HCT116 (cell line): ENCODE measurements at regions of chr6 and their contacts with region 1.

Region 1: DNA sequence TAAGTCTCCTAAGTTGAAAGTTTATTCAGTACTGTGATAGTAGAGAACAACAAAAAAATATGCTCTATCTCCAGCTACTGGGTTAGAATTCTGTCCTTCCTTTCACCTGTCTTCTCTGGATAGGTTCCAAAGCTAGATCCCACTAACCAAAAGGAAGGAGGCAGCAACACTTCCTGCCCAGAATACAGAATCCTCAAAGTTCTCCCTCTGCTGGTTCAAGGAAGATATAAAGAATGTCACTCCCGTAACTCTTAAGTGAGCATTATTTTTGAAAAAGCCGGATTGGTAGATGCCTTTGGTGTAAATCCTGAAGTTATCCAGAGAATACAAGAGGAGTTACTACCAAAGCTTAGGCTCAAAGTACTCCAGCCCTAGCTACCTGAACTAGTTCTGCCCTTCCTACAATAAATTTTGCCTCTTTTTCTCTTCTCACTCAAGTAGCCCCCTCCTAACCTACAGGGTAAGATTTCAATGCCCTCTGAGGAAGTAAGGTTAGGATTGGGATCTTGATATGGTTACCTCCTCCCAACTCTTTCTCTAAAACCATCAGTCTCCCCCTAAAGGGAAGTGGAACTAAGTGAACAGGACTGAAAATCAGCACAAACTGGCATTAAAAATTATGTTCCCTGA is 26.0 kb upstream of the CRIP3 start:
- DNase-seq: peak; percentile 68
- ATAC-seq: peak; percentile 98
- H3K4me3 ChIP-seq: no peak overlapping the region
- H3K27ac ChIP-seq: no peak overlapping the region
- H3K4me1 ChIP-seq: peaks cover 4 to 6% of the 10 kb centered on the region in 2 experiments; a peak in 3 of 4 replicates
- H3K27me3 ChIP-seq: no peaks in the 10 kb centered on the region
- CTCF ChIP-seq: peak; percentile 60 to 79 (median 60); a peak in 5 of 6 replicates
- POLR2A ChIP-seq: no peak
- RAD21 ChIP-seq: peak; percentile 67

Region 2: GRCh38 chr6:43203029-43203717 is 131.4 kb before region 1 on chr6:
- CTCF ChIA-PET with region 1: no interaction called
- POLR2A ChIA-PET with region 1: no interaction called
- RAD21 ChIA-PET with region 1: no interaction called
- intact Hi-C with region 1: no loop called
- DNase-seq: no peak
- ATAC-seq: peak; percentile 26; the same call in 1 of the 2 replicates
- H3K4me3 ChIP-seq: no peak overlapping the region
- H3K27ac ChIP-seq: no peak overlapping the region
- H3K4me1 ChIP-seq: no peaks in the 10 kb centered on the region
- H3K27me3 ChIP-seq: no peaks in the 10 kb centered on the region
- CTCF ChIP-seq: no peak
- POLR2A ChIP-seq: no peak
- RAD21 ChIP-seq: no peak

Region 3: GRCh38 chr6:43263314-43264178 is 71.0 kb before region 1 on chr6:
- CTCF ChIA-PET with region 1: interaction called, 16 read pairs
- POLR2A ChIA-PET with region 1: no interaction called
- RAD21 ChIA-PET with region 1: interaction called in 1 of 2 experiments, 3 read pairs
- intact Hi-C with region 1: loop called (anchors 1 kb)
- DNase-seq: peak; percentile 51
- ATAC-seq: peak; percentile 99
- H3K4me3 ChIP-seq: no peak overlapping the region
- H3K27ac ChIP-seq: no peak overlapping the region
- H3K4me1 ChIP-seq: no peaks in the 10 kb centered on the region
- H3K27me3 ChIP-seq: no peaks in the 10 kb centered on the region
- CTCF ChIP-seq: peak; percentile 86 to 91 (median 88)
- POLR2A ChIP-seq: no peak
- RAD21 ChIP-seq: peak; percentile 97